Activated CD4-positive, alpha-beta memory T cell treated with anti-CD3 and anti-CD28 coated beads for 36 hours (primary cell): ENCODE measurements at regions of chr20 and their contacts with region 1.

Region 1: GRCh38 chr20:35711588-35712209 is 12.5 kb downstream of the ROMO1 start:
- DNase-seq: no peak
- H3K4me3 Mint-ChIP-seq: peak overlapping the region; percentile 28
- H3K27ac Mint-ChIP-seq: peak overlapping the region; percentile 83
- H3K4me1 Mint-ChIP-seq: peaks cover 56% of the 10 kb centered on the region
- H3K27me3 Mint-ChIP-seq: no peaks in the 10 kb centered on the region

Region 2: DNA sequence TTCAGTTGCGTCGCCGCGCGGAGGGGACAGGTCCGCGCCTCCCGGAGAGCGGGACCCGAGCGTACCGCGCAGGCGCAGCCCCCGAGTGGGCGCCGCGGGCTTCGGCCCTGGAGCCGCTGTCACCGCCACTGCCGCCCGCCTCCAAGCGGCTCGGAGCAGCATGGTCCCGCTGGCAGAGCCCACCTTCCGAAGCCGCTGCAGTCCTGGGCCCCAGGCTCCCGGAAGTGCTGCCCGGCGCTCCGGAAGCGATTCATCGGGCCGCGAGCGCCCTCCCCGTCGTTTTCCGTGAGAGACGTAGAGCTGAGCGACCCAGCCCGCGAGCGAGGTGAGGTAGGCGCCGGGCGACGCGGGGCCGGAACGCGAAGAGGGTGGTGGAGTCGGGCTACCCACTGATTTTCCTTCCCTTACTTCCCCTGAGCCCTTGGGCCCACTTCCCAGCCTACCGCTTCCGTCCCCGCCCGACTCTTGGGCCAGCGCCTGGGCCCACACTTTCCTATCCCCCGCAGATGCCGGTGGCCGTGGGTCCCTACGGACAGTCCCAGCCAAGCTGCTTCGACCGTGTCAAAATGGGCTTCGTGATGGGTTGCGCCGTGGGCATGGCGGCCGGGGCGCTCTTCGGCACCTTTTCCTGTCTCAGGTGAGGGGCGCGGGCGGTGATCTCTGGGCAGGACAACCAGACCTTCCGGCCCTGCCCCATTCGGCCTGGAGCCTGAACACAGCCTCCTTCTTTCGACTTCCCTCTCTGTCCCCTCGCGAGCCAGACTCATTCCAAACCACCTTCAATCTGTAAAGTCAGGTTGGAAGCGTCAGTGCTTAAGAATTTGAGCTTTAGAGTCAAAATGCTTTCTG is 12.3 kb before region 1 on chr20 and contains the starts of genes NFS1 and ROMO1:
- CTCF ChIA-PET with region 1: interaction called, 5 read pairs
- POLR2A ChIA-PET with region 1: interaction called, 27 read pairs
- intact Hi-C with region 1: no loop called
- DNase-seq: peak; percentile 91
- H3K4me3 Mint-ChIP-seq: peak within 1 kb of the TSS; percentile 88
- H3K27ac Mint-ChIP-seq: peak within 1 kb of the TSS; percentile 91
- H3K4me1 Mint-ChIP-seq: peaks cover 50% of the 10 kb centered on the region
- H3K27me3 Mint-ChIP-seq: no peaks in the 10 kb centered on the region
- total RNA-seq, gene NFS1: 36.9 to 40.8 TPM
- total RNA-seq, gene ROMO1: 141 to 142 TPM

Region 3: GRCh38 chr20:35729836-35730582 is 18.3 kb after region 1 on chr20:
- CTCF ChIA-PET with region 1: interaction called, 5 read pairs
- POLR2A ChIA-PET with region 1: interaction called, 13 read pairs
- intact Hi-C with region 1: no loop called
- DNase-seq: no peak
- H3K4me3 Mint-ChIP-seq: no peak overlapping the region
- H3K27ac Mint-ChIP-seq: peak overlapping the region; percentile 45
- H3K4me1 Mint-ChIP-seq: peaks cover 46% of the 10 kb centered on the region
- H3K27me3 Mint-ChIP-seq: no peaks in the 10 kb centered on the region

Region 4: GRCh38 chr20:35735828-35736470 is 24.2 kb after region 1 on chr20:
- CTCF ChIA-PET with region 1: interaction called, 5 read pairs
- POLR2A ChIA-PET with region 1: interaction called, 13 read pairs
- intact Hi-C with region 1: no loop called
- DNase-seq: no peak
- H3K4me3 Mint-ChIP-seq: peak overlapping the region; percentile 17
- H3K27ac Mint-ChIP-seq: peak overlapping the region; percentile 79
- H3K4me1 Mint-ChIP-seq: peaks cover 58% of the 10 kb centered on the region
- H3K27me3 Mint-ChIP-seq: no peaks in the 10 kb centered on the region